ENCODE measurements at regions of chr10 and their contacts with region 1.

Region 1: GRCh38 chr10:63976538-63976937 is 455.3 kb downstream of the REEP3 start:
- DNase-seq: peak; percentile 13
- H3K4me3 Mint-ChIP-seq: no peak overlapping the region
- H3K27ac Mint-ChIP-seq: no peak overlapping the region
- H3K4me1 Mint-ChIP-seq: no peaks in the 10 kb centered on the region
- H3K27me3 Mint-ChIP-seq: no peaks in the 10 kb centered on the region

Region 2: GRCh38 chr10:63843108-63843507 is 133.4 kb before region 1 on chr10:
- intact Hi-C with region 1: no loop called
- DNase-seq: no peak
- H3K4me3 Mint-ChIP-seq: no peak overlapping the region
- H3K27ac Mint-ChIP-seq: no peak overlapping the region
- H3K4me1 Mint-ChIP-seq: no peaks in the 10 kb centered on the region
- H3K27me3 Mint-ChIP-seq: no peaks in the 10 kb centered on the region

Region 3: DNA sequence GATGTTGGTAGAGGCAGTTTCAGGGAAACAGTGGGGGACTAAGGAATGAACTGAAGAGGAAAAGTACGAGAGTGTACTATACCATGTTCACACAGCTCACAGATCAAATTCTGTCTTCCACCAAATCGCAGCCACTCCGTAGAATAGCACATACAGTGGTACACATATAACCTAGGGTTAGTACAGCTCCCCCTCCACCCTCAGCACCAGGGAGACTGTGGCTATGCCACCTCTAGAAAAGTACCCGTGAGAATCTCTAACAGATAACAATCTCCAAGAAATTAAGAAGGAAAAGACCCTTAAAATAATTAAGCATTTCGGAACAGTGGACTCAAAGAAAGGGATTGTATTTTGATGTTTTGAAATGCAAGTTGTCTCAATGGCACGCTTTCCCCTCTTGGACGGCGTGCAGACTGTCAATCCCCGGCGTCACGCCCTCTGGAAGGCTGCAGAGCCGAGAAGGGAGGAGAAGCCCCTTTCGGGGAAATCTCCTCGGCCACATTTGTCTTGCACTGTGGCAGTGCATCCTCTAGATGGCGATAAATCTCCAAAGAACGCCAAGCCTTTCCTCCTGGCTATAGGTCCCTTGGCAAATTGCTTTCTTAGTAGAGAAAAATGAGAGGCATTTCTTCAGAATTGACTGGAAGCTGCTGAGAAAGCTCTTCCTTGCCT is 110.3 kb before region 1 on chr10:
- intact Hi-C with region 1: loop called (anchors 2 kb)
- DNase-seq: peak; percentile 16
- H3K4me3 Mint-ChIP-seq: no peak overlapping the region
- H3K27ac Mint-ChIP-seq: no peak overlapping the region
- H3K4me1 Mint-ChIP-seq: peaks cover 3% of the 10 kb centered on the region
- H3K27me3 Mint-ChIP-seq: peaks cover 12% of the 10 kb centered on the region

Measured in activated T-helper 2 cell treated with anti-CD3 and anti-CD28 coated beads, Interferon-gamma antibody, Interleukin-2, Interleukin-4, amounts not matched to agents 10 μg/mL and 5 μg/mL and 100 μg/mL, durations not matched to agents 14 hours and 24 hours and 36 hours (primary cell).